ENCODE measurements at regions of chr11 and their contacts with region 1.

Region 1: DNA sequence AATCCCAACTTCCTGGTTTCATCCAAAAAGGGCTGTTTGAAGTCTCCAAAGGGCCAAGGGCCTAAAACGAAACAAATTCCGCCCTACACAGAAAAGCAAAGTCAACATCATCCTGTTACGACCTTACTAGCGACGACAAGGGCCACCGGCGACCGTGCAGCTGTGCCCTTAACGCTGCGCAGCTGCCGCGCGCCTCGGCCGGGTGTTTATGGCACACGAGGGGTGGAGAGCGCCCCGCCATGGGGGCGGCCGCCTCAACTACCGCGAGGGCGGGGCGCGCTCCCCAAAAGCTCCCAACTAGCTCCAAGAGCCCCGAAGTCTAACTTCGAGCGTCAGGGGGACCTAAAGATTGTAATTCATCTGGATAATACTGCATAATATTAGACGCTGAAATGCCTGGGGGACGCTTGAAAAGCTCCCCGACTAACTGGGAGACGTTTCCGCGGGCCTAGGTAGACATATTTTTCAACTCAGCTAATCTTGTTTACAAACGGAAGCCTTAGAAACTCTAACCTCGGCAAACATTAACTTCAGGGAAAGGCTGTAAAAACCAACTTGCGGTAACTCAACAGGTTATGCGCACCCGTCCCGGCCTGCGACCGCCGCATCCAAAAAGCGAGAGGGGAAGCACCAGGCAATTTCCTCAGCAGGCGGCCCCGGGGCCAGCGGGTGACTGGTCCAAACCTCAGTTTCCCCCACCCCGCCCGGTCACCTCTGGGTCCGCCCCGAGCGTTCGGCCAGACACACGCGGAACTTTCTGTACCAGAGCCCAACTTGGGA is 694 bp downstream of the TMEM123 start:
- DNase-seq: peak; percentile 49
- H3K4me3 Mint-ChIP-seq: peak overlapping the region; percentile 96
- H3K27ac Mint-ChIP-seq: peak overlapping the region; percentile 69
- H3K4me1 Mint-ChIP-seq: peaks cover 39% of the 10 kb centered on the region
- H3K27me3 Mint-ChIP-seq: no peaks in the 10 kb centered on the region
- CTCF ChIP-seq: no peak

Region 2: DNA sequence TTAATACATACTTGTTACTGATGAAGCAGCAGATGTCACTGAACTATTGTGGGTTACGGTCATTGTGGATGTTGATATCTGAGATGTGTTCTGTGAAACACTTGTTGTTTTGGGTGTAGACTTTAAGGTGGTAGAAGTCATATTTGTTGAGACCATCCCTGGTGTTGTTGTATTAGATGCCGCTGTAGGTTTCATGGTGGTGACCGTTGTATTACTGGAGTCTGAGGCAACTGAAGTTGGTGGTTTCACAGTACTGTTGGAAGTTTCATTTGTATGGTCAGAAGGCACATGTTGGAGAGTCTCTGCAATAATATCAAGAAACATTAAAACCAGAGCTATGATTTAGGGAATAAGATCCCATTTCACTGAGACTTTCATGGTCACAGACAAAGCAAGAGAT is 50.0 kb before region 1 on chr11:
- CTCF ChIA-PET with region 1: no interaction called
- intact Hi-C with region 1: loop called (anchors 5 kb)
- DNase-seq: no peak
- H3K4me3 Mint-ChIP-seq: no peak overlapping the region
- H3K27ac Mint-ChIP-seq: no peak overlapping the region
- H3K4me1 Mint-ChIP-seq: no peaks in the 10 kb centered on the region
- H3K27me3 Mint-ChIP-seq: no peaks in the 10 kb centered on the region
- CTCF ChIP-seq: no peak

Region 3: DNA sequence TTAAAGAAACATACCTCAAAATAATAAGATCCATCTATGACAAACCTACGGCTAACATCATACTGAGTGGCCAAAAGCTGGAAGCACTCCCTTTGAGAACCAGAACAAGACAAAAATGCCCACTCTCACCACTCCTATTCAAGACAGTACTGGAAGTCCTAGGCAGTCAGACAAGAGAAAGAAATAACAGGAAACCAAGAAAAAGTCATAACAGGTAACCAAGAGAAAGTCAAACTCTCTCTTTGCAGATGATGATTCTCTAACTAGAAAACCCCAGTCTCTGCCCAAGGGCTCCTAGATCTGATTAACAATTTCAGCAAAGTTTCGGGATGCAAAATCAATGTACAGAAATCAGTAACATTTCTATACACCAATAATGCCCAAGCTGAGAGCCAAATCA is 34.9 kb before region 1 on chr11:
- CTCF ChIA-PET with region 1: no interaction called
- intact Hi-C with region 1: loop called (anchors 5 kb)
- DNase-seq: no peak
- H3K4me3 Mint-ChIP-seq: no peak overlapping the region
- H3K27ac Mint-ChIP-seq: no peak overlapping the region
- H3K4me1 Mint-ChIP-seq: peaks cover 27% of the 10 kb centered on the region
- H3K27me3 Mint-ChIP-seq: no peaks in the 10 kb centered on the region
- CTCF ChIP-seq: no peak

Region 4: DNA sequence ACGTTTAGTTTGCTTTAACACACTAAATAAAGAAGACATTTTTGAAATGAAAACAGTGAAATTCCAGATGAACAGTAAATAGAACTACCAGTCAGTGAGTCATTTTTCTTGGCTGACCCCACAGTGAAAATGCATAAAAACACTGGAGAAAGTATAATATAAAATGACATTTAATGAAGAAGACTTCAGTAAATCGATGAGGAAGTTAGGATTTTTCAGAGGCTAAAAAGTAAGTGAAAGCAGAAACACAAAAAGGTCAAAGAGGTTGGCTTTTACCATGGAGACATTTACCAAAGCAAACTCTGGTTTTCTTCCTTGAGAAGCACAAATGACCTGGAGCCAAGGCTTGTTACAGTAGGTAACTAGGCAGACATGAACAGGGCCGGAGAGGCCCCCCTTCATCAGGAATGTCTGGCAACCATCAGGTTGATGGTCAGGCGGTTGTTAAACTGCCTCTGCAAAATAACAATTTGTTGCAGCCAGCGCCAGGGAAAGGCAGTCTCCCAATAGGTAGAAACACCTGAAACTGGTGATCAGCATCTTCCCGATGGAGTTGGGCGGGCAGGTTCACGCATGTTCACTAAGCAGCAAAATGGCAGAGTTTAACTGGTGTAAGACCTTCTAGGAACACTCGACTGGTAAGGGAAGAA is 17.4 kb after region 1 on chr11:
- CTCF ChIA-PET with region 1: no interaction called
- intact Hi-C with region 1: no loop called
- DNase-seq: peak; percentile 10
- H3K4me3 Mint-ChIP-seq: peak overlapping the region; percentile 2
- H3K27ac Mint-ChIP-seq: peak overlapping the region; percentile 34
- H3K4me1 Mint-ChIP-seq: peaks cover 80% of the 10 kb centered on the region
- H3K27me3 Mint-ChIP-seq: no peaks in the 10 kb centered on the region
- CTCF ChIP-seq: no peak

Region 5: GRCh38 chr11:102500829-102501228 is 49.0 kb after region 1 on chr11:
- CTCF ChIA-PET with region 1: no interaction called
- intact Hi-C with region 1: no loop called
- DNase-seq: no peak
- H3K4me3 Mint-ChIP-seq: no peak overlapping the region
- H3K27ac Mint-ChIP-seq: no peak overlapping the region
- H3K4me1 Mint-ChIP-seq: no peaks in the 10 kb centered on the region
- H3K27me3 Mint-ChIP-seq: no peaks in the 10 kb centered on the region
- CTCF ChIP-seq: no peak

Region 6: GRCh38 chr11:102810945-102811660 is 359.2 kb after region 1 on chr11:
- CTCF ChIA-PET with region 1: no interaction called
- intact Hi-C with region 1: no loop called
- DNase-seq: no peak
- H3K4me3 Mint-ChIP-seq: no peak overlapping the region
- H3K27ac Mint-ChIP-seq: no peak overlapping the region
- H3K4me1 Mint-ChIP-seq: peaks cover 9% of the 10 kb centered on the region
- H3K27me3 Mint-ChIP-seq: peaks cover 7% of the 10 kb centered on the region
- CTCF ChIP-seq: peak; percentile 36

Measured in Calu3 (cell line).